Ovary (tissue), 10 donors: ENCODE measurements at regions of chr20 and their contacts with region 1.

Region 1: DNA sequence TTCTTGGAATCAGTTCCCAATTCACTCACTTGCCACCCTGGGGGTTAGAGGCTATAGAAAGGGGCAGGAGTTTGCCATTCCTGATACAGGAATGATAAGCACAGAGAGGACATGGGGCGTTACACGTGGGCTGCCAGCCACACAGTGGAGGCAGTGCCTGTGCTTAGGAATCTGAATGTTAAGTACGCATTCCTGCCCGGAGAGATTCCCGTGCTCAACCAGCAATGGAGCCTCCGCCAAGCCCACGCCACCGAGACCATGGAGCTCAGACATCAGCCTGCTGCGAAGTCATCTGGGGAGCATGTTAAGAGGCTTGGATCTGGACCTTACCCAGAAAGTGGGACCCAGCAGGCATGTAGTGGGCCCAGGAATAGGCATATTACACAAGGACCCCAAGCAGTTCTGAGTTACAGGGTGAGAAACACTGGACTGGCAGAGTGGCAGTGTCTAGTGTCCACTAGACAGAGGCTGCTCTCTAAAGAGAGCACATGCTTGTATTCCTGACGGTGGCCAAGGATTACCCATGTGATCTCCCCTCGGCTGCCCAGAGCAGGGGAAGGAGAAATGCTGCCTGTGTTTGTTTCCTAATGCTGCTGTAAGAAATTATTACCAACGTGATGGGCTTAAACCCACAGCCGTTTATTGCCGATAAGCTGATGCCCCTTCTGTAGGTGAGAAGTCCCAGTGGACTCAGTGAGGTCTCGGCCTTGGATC is 138.2 kb downstream of the BMP7 start:
- DNase-seq: no peak
- H3K4me3 ChIP-seq: no peak overlapping the region
- H3K27ac ChIP-seq: no peak overlapping the region
- H3K4me1 ChIP-seq: no peaks in the 10 kb centered on the region
- H3K27me3 ChIP-seq: no peaks in the 10 kb centered on the region
- CTCF ChIP-seq: no peak
- EP300 ChIP-seq: no peak
- POLR2A ChIP-seq: no peak

Region 2: DNA sequence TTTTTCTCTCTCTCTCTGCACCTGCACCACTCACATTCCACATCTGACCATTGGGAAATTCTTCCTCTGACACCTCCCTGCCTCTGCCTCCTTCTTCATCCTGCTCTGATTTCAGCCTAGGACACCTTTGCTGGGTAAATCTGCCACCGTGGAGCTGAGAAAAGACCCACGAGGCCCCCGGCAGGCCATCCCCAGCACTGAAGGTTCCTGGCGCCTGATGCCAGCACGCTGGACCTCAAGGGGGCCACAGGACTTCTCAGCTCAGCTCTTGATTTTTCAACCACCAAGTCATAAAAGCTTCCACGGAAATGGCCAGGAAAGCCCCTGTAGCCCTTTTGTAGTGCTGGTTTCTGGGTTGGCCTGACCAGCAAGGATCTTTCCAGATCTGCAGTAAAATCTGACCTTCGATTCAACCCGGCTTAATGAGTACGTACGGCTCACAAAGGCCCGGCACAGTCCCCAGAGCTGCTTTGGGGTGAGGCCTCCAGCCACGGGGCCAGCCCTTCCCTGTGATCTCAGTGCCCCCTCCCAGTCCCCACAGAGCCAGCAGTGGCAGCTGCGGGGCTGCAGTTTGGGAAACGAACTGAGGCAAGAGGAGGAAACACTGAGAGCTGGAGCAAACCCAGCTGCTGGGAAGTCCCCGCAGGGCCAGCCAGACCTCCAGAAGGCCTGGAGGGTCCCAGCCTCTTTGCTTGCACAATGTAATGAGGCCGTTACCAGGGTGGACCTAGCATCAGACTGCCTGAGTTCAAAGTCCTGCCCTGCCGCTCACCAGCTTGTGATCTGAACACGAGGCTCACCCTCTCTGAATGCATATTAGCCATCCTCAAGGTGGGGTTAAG is 19.2 kb before region 1 on chr20:
- intact Hi-C with region 1: loop called in 1 of 4 experiments (anchors 2 kb)
- DNase-seq: no peak
- H3K4me3 ChIP-seq: no peak overlapping the region
- H3K27ac ChIP-seq: no peak overlapping the region
- H3K4me1 ChIP-seq: no peaks in the 10 kb centered on the region
- H3K27me3 ChIP-seq: no peaks in the 10 kb centered on the region
- CTCF ChIP-seq: no peak
- EP300 ChIP-seq: no peak
- POLR2A ChIP-seq: no peak